ENCODE measurements at regions of chr17 and their contacts with region 1.

Region 1: GRCh38 chr17:82037113-82037888 is at the start of gene DCXR:
- DNase-seq: peak; percentile 97
- H3K4me3 ChIP-seq: peak within 1 kb of the TSS; percentile 58 to 71 (median 69)
- H3K27ac ChIP-seq: peak within 1 kb of the TSS; percentile 36
- H3K4me1 ChIP-seq: peaks cover 9% of the 10 kb centered on the region
- H3K27me3 ChIP-seq: no peaks in the 10 kb centered on the region
- CTCF ChIP-seq: peak; percentile 87 to 92
- POLR2A ChIP-seq: peak; percentile 80
- total RNA-seq, gene DCXR: 75.2 and 93.0 TPM in 2 replicates

Region 2: GRCh38 chr17:81967533-81968395 is 69.5 kb before region 1 on chr17:
- CTCF ChIA-PET with region 1: no interaction called
- POLR2A ChIA-PET with region 1: no interaction called
- dilution Hi-C with region 1: no loop called
- intact Hi-C with region 1: no loop called
- DNase-seq: no peak
- H3K4me3 ChIP-seq: no peak overlapping the region
- H3K27ac ChIP-seq: no peak overlapping the region
- H3K4me1 ChIP-seq: no peaks in the 10 kb centered on the region
- H3K27me3 ChIP-seq: peaks cover 15 to 16% of the 10 kb centered on the region in 2 experiments
- CTCF ChIP-seq: no peak
- POLR2A ChIP-seq: no peak

Region 3: DNA sequence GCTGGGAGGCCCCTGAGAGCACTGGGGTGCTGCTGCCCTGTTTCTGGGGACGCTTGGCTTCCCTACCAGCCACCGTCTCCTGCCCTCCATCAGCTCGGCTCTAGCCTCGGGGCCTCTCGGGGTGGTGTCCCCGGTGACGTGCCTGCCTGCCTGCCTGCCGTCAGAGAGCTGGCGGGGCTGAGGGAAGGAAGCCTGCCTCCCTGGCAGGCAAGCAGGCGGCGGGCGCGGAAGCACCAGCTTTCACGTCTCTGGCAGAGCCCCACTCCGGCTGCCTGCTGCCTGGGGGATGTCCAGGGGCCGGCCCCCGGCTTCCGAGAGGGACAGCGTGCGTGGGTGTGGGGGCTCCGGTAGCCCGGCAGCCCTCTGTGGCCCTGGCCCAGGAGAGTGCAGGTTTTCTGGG is 24.0 kb before region 1 on chr17:
- CTCF ChIA-PET with region 1: no interaction called
- POLR2A ChIA-PET with region 1: no interaction called
- dilution Hi-C with region 1: no loop called
- intact Hi-C with region 1: no loop called
- DNase-seq: no peak
- H3K4me3 ChIP-seq: no peak overlapping the region
- H3K27ac ChIP-seq: no peak overlapping the region
- H3K4me1 ChIP-seq: no peaks in the 10 kb centered on the region
- H3K27me3 ChIP-seq: no peaks in the 10 kb centered on the region
- CTCF ChIP-seq: no peak
- POLR2A ChIP-seq: no peak

Region 4: GRCh38 chr17:82051776-82052637 is 14.7 kb after region 1 on chr17 and contains the starts of genes GPS1 and RFNG:
- CTCF ChIA-PET with region 1: interaction called, 18 read pairs
- POLR2A ChIA-PET with region 1: no interaction called
- dilution Hi-C with region 1: no loop called
- intact Hi-C with region 1: loop called (anchors 2 kb)
- DNase-seq: peak; percentile 33
- H3K4me3 ChIP-seq: peak within 1 kb of the TSS; percentile 65 to 89 (median 76)
- H3K27ac ChIP-seq: no peak within 1 kb of the TSS
- H3K4me1 ChIP-seq: peaks cover 11% of the 10 kb centered on the region
- H3K27me3 ChIP-seq: no peaks in the 10 kb centered on the region
- CTCF ChIP-seq: no peak
- POLR2A ChIP-seq: no peak
- total RNA-seq, gene GPS1: 96.6 and 116 TPM in 2 replicates
- total RNA-seq, gene RFNG: 33.7 and 36.9 TPM in 2 replicates

Region 5: DNA sequence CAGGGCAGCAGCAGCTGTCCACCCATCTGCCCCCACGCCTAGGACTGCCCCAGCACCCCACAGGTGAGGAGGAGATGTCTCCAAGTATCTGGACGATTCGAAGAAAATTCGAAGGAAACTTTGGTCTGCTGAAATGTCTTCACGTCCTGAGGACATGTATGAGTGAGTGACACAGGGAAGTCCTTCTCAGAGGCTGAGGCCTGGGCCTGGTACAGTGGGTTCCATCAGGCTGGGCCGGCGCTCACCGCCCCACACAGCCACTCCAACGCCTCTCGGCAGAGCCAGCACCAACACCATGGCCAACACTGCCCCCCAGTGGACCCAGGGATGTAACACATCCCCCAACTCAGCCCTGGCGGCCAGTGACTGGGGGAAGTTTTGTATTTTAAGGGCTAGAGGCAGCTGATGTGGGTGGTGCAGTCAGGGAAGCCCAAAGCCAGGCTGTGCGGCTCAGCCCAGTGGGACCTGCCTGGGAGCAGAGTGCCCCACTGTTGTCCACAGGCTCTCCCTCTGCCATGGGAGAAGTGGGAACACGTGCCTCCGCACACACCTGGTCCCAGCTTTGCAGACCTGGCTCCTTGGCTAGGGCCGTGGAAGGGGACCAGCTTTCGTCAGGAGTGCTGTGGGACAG is 116.6 kb after region 1 on chr17:
- CTCF ChIA-PET with region 1: interaction called, 11 read pairs
- POLR2A ChIA-PET with region 1: interaction called, 3 read pairs
- dilution Hi-C with region 1: no loop called
- intact Hi-C with region 1: no loop called
- DNase-seq: peak; percentile 56
- H3K4me3 ChIP-seq: no peak overlapping the region
- H3K27ac ChIP-seq: no peak overlapping the region
- H3K4me1 ChIP-seq: no peaks in the 10 kb centered on the region
- H3K27me3 ChIP-seq: no peaks in the 10 kb centered on the region
- CTCF ChIP-seq: peak; percentile 72 to 92
- POLR2A ChIP-seq: no peak

Measured in endothelial cell of umbilical vein (primary cell).